ENCODE measurements at regions of chr6 and their contacts with region 1.

Region 1: GRCh38 chr6:1424306-1424928 is 35.0 kb downstream of the FOXF2 start:
- DNase-seq: no peak
- H3K4me3 ChIP-seq: no peak overlapping the region
- H3K27ac ChIP-seq: no peak overlapping the region
- H3K27me3 ChIP-seq: peaks cover 12% of the 10 kb centered on the region
- CTCF ChIP-seq: peak; percentile 78

Region 2: DNA sequence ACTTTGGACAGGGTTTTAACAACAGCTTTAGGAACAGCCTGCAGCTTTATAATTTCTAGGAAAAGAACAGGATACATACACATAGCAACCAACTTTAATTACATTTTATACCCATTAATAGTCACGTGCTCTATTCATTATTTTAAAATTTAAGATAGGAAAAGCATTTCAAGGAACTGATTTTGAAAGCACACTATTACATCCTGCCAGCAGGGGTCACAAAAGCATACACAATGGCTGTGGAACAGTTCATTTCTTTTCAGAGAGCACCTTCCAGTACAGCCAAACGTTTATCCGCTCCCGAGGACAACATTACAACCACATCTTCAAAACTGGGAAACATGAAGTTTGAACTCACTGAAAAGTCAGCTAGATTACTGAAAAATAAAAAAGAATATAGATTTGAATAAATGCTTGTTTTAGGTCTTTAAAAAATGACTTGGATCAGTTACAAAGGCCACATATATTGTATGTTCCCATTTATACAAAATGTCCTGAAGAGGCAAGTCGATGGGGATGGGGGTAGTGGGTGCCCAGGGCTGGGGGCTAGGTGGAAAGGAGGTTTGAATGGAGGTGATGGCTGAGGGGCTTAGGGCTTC is 626.8 kb before region 1 on chr6:
- CTCF ChIA-PET with region 1: interaction called, 41 read pairs
- POLR2A ChIA-PET with region 1: no interaction called
- DNase-seq: peak; percentile 21
- H3K4me3 ChIP-seq: no peak overlapping the region
- H3K27ac ChIP-seq: no peak overlapping the region
- H3K27me3 ChIP-seq: peaks cover 21% of the 10 kb centered on the region
- CTCF ChIP-seq: peak; percentile 80

Region 3: DNA sequence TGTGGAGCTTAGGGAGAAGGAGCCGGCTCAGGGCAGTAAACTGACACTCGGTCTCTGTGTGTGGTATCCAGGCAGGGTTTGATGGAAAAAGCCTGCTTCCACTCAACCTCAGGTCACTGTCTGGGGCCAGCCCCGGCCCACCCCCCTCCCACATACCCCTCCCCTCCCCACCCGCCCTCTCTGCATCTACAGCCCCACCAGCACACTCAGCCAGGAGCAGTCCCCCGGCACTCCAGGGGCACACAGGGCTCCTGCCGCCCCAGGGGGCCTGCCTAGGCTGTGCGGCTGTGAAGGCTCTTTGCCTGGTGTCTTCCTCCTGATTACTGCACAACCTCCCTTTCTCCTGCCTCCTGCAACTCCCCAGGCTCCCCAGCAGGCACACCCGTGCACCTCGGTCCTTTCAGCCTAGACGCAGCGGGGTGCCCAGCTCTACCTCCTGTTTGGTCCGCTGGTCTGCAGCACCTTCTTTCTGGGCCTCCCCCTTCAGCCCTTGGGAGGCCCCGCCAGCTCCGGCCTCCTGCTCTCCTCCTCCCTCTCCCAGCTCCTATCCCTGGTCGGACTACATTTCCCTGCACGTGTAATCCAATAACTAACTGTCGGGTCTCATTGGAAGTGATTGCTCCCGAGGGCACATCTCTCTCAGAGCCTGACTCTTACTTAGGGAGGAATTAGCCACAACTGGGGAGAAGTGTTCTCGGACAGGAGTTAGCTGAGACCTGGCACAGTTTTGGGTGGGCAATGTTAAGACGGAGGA is 36.4 kb before region 1 on chr6:
- CTCF ChIA-PET with region 1: interaction called, 10 read pairs
- POLR2A ChIA-PET with region 1: no interaction called
- DNase-seq: no peak
- H3K4me3 ChIP-seq: peak overlapping the region; percentile 76
- H3K27ac ChIP-seq: no peak overlapping the region
- H3K27me3 ChIP-seq: peaks cover 3% of the 10 kb centered on the region
- CTCF ChIP-seq: peak; percentile 19; the same call in 1 of the 2 replicates

Region 4: DNA sequence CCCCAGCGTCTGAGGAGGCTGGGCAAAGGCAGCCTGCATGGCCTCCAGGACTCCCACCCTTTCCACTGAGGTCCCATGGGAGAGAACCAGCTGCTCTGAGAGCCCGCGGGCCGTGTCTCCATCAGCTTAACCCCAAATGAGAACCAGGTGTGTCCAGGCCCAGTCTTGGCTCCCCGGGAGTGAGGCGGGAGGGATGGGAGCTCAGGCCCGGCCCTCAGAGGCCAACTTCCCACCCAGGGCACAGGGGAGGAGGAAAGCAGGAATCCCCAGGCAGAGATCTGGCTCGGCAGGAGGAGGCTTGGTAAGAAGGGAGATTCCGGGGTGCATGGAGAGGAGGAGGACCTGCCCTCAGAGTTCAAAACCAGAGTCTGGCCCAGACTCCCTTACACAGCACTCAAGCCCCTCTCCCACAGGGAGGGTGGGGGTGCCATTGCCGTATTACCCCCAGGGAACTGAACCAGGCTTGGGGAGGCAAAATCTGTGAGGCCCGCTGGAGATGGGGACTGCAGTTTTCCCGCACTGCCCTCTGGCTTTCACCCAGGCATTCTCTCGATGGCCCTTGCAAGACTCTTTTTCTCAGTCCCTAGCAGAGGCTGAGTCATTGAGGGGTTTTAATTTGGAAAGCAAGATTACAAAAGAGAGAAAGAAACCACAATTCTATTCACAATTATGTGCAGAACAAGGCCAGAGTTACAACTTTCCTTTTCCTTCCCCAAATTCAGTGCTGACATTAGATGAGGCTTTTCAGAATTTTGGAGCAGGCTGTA is 17.9 kb before region 1 on chr6:
- CTCF ChIA-PET with region 1: interaction called, 12 read pairs
- POLR2A ChIA-PET with region 1: no interaction called
- DNase-seq: no peak
- H3K4me3 ChIP-seq: no peak overlapping the region
- H3K27ac ChIP-seq: peak overlapping the region; percentile 58
- H3K27me3 ChIP-seq: no peaks in the 10 kb centered on the region
- CTCF ChIP-seq: peak; percentile 25

Region 5: DNA sequence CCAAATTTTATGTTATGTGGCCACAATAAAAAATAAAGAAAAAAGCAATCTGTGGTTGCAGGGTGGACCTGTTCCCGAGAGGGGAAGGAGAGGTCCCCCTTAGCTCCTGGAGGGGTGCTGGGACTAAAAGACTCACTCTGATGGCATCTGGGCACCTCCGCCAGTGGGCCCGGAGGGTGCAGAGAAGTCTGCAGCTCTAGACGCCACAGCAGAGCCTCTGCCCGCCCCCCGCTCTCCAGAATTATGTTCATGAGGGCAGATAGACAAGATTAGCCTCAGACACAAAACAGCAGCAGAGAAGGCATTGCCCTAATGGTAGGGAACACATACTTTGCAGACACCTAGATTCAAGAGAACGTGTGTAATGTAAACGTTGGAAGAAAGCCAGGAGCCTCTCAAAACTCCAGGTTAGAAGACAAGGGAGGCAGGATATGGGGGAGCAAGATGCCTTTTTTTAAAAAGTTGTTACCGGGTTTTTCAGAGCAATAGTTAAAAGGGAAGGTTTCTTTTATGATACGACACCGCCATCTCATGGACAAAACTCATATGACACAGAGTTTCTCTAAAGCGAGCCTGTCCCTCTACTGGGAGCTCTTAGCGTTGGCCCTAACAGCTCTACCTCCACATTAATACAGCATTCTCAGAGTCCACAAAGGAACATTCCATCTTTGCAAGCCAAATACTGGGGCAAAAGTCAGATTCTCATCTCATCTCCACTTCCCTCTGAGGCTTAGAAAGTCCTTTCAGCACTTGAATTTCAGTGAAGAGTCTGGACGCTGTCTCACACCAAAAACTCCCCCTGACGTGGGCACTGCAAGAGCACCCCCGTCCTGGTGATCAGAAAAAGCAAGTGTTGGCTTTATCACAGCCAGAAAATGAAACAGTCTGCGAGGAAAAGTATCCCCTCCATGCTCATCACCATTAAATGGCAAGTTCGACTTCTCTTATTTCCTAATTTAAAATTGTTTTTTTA is 12.2 kb after region 1 on chr6:
- CTCF ChIA-PET with region 1: interaction called, 20 read pairs
- POLR2A ChIA-PET with region 1: no interaction called
- DNase-seq: peak; percentile 36
- H3K4me3 ChIP-seq: no peak overlapping the region
- H3K27ac ChIP-seq: no peak overlapping the region
- H3K27me3 ChIP-seq: peaks cover 11% of the 10 kb centered on the region
- CTCF ChIP-seq: peak; percentile 78

Region 6: GRCh38 chr6:1481326-1481725 is 56.9 kb after region 1 on chr6:
- CTCF ChIA-PET with region 1: no interaction called
- POLR2A ChIA-PET with region 1: no interaction called
- DNase-seq: peak; percentile 47
- H3K4me3 ChIP-seq: no peak overlapping the region
- H3K27ac ChIP-seq: peak overlapping the region; percentile 58
- H3K27me3 ChIP-seq: no peaks in the 10 kb centered on the region
- CTCF ChIP-seq: no peak

Measured in AG04450 (cell line).